Activated naive CD4-positive, alpha-beta T cell treated with anti-CD3 and anti-CD28 coated beads for 36 hours (primary cell): ENCODE measurements at regions of chr7 and their contacts with region 1.

Region 1: DNA sequence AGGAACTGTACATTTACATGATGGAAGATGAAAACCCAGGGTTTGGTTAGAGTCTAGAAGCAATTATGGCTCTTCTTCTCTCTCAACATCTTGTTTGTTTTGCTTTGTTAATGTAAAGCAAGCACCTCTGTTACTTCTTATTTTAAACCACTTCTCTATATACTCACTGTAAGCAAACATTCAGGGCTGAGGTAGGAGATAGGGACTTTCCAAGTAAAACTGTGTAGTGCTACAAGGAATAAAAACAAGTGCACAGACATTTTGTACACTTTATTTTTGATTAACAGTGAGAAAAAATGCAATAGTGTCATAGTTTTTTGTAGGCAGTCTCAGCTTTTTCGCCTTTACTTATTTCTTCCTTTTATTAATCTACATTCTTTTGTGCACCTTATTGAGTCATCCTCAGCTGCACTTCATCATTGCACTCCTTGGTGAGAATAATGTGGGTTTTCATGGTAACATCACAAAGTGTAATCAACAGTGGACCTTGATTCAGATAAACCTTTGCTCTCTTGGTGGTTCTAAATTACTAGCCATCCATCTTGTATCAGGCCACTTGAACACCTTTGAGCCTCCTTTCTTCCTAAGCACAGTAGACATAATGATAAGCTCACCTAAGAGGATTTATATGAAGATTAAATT is 52.9 kb downstream of the ELMO1 start:
- DNase-seq: peak; percentile 26
- H3K4me3 Mint-ChIP-seq: no peak overlapping the region
- H3K27ac Mint-ChIP-seq: peak overlapping the region; percentile 80
- H3K4me1 Mint-ChIP-seq: peaks cover 77% of the 10 kb centered on the region
- H3K27me3 Mint-ChIP-seq: no peaks in the 10 kb centered on the region

Region 2: DNA sequence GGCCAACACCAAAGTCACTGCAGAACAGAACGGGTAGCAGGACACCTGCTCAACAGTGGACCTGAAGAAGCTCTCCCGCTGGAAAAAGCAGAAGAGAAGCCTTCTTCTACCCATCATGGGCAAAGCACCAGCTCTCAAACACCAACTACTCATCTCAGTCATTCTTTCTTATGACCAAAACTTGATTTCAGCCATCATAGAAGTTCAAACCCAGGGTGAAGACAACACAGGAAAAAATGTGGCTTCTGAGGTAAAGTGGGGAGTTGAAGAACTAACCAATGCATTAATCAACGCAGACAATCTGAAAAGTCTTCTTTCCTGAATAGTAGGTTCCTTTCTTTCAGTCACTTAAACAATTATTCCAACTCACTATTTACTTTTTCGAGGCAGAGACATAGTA is 30.3 kb before region 1 on chr7:
- CTCF ChIA-PET with region 1: no interaction called
- intact Hi-C with region 1: loop called (anchors 1 kb)
- DNase-seq: no peak
- H3K4me3 Mint-ChIP-seq: peak overlapping the region; percentile 15
- H3K27ac Mint-ChIP-seq: peak overlapping the region; percentile 99
- H3K4me1 Mint-ChIP-seq: peaks cover 88% of the 10 kb centered on the region
- H3K27me3 Mint-ChIP-seq: no peaks in the 10 kb centered on the region

Region 3: DNA sequence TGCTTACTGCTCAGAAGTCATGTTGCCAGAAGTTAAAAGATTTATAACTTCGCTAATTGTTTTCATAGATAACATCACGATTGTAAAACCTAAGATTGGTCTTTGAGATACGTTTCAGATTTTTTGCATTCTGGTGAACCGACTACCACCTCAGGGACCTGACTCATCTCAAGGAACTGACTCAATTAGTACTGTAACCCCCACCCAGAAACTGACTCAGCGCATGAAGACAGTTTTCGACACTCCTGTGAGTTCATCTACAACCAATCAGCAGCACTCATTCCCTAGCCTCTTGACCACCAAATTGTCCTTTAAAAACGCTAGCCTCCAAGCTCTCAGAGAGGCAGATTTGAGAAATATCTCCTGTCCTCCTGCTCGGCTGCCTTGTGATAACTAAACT is 19.4 kb before region 1 on chr7:
- CTCF ChIA-PET with region 1: no interaction called
- intact Hi-C with region 1: loop called (anchors 2 kb)
- DNase-seq: peak; percentile 69
- H3K4me3 Mint-ChIP-seq: no peak overlapping the region
- H3K27ac Mint-ChIP-seq: peak overlapping the region; percentile 65
- H3K4me1 Mint-ChIP-seq: peaks cover 68% of the 10 kb centered on the region
- H3K27me3 Mint-ChIP-seq: no peaks in the 10 kb centered on the region

Region 4: DNA sequence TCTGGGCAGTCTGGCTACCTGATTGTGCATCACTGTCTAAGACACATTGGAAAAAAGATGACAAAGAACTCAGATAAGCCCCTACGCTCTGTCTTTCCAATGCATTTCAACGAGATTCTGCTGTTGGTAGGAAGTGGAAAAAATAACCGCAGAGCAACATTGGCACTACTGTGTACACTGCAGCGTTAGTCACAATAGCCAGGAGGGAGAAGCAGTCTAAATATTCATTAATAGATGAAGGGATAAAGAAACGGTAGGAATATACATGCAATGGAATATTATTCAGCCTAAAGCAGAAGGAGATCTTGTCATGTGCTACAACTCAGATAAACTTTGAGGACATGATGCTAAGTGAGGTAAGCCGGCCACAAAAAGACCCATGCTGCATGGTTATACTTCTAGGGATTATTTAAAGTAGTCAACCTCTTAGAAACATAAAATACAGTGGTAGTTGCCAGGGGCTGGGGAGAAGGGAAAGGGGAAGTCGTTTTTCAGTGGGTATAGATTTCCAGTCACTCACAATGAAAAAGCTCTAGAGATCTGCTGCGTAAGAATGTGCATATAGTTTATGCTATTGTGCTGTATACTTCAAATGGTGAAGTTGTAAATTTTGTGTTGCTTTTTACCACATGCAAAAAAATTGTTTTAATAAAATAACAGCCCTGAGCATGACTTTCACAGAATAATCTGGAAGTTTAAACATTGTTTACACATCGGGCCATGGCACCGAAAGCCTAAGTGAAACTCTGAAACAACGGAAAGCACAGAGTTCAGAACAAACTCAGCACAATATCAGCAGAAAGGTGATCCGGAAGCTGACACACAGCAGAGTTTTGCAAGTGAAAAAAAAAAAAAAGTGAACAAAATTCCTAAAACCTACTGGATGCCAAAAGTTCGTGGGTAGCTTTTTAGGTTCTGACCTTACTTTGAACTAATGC is 12.8 kb after region 1 on chr7:
- CTCF ChIA-PET with region 1: no interaction called
- intact Hi-C with region 1: loop called (anchors 1 kb)
- DNase-seq: peak; percentile 44
- H3K4me3 Mint-ChIP-seq: peak overlapping the region; percentile 77
- H3K27ac Mint-ChIP-seq: peak overlapping the region; percentile 98
- H3K4me1 Mint-ChIP-seq: peaks cover 87% of the 10 kb centered on the region
- H3K27me3 Mint-ChIP-seq: no peaks in the 10 kb centered on the region

Region 5: DNA sequence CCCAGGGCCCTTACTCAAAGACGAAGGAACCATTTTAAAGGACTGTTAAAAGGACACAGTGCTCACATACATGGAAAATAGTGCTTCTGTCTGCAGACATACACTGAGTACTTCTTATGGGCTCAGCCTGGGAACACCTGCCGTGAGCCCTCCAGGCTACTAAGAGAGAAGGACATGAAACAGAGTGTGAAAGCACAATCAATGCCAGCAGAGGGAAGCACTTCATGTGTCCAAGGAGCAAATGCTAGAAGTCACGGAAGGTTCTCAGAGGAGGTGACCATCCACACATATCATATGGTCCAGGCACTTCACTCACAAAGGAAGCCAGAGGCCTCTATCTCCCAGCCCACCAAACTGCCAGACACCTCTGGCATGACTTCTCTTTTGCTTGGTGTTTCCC is 37.4 kb after region 1 on chr7:
- CTCF ChIA-PET with region 1: no interaction called
- intact Hi-C with region 1: loop called (anchors 2 kb)
- DNase-seq: no peak
- H3K4me3 Mint-ChIP-seq: no peak overlapping the region
- H3K27ac Mint-ChIP-seq: peak overlapping the region; percentile 85
- H3K4me1 Mint-ChIP-seq: peaks cover 96% of the 10 kb centered on the region
- H3K27me3 Mint-ChIP-seq: no peaks in the 10 kb centered on the region